AG04450 (cell line): ENCODE measurements at regions of chr14 and their contacts with region 1.

Region 1: GRCh38 chr14:75906676-75907280 is 75.0 kb downstream of the TGFB3 start:
- DNase-seq: peak; percentile 36
- H3K4me3 ChIP-seq: no peak overlapping the region
- H3K27ac ChIP-seq: no peak overlapping the region
- H3K27me3 ChIP-seq: no peaks in the 10 kb centered on the region
- CTCF ChIP-seq: peak; percentile 88

Region 2: DNA sequence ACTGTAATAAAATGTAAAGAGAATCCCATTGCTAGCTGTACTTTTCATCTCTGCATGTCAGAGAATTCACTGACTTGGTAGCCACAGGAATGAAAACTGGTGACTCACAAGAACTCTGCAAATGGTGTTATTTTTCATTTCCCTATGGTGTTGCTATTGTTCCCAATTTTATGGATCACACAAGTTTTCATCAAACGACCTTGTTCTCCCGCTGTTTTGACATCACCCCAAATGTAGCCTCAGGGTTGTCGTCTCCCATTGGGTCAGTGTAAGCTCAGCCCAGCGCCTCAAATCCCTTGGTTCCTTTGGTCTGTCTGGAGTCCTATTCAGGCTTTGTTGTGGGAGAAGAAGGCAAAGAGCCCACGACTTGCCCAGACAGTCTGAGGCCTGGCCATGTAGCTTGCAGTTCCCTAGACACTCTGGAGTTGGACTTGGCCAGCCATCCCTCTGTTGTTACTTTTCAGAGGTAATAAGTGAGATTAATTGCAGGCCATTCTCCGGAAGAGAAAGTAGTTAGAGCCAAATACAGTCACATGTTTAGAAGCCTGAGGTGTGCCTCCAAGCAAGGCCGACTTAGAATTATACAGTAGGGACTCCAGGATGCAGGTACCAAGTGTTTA is 84.1 kb before region 1 on chr14:
- CTCF ChIA-PET with region 1: interaction called, 22 read pairs
- POLR2A ChIA-PET with region 1: no interaction called
- DNase-seq: peak; percentile 46
- H3K4me3 ChIP-seq: no peak overlapping the region
- H3K27ac ChIP-seq: peak overlapping the region; percentile 59
- H3K27me3 ChIP-seq: no peaks in the 10 kb centered on the region
- CTCF ChIP-seq: no peak

Region 3: GRCh38 chr14:75896341-75896740 is 10.4 kb before region 1 on chr14:
- CTCF ChIA-PET with region 1: interaction called, 55 read pairs
- POLR2A ChIA-PET with region 1: interaction called, 6 read pairs
- DNase-seq: no peak
- H3K4me3 ChIP-seq: no peak overlapping the region
- H3K27ac ChIP-seq: no peak overlapping the region
- H3K27me3 ChIP-seq: no peaks in the 10 kb centered on the region
- CTCF ChIP-seq: no peak

Region 4: DNA sequence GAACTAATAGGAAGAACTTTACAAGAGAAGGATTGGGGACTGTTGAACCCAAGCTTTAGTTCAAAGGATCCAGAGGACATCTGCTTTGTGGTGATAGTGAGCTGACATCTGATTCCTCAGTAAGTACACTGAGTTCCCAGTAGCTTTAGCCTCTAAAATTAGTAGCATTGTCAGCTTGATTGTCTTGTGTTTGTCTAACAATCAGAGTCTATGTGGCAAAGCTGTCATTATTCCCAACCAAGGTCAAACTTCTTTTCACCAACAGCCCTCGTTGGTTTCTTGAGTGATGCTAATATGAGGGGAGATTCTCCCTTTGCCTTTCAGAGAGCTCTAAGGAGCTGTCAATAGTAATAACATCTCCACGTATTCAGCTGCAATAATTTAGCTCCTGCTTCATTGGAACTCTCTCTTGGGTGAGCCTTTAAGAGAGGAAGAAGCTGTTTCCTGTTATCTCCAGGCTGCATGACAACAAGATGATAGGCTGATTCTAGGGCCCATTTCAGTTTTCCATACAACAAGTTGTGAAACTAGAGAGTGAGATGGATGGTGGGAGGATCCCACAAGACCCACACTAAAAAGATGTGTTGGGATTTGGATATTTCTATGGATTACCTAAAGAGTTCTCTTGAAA is 28.3 kb after region 1 on chr14:
- CTCF ChIA-PET with region 1: interaction called, 35 read pairs
- POLR2A ChIA-PET with region 1: no interaction called
- DNase-seq: no peak
- H3K4me3 ChIP-seq: no peak overlapping the region
- H3K27ac ChIP-seq: no peak overlapping the region
- H3K27me3 ChIP-seq: no peaks in the 10 kb centered on the region
- CTCF ChIP-seq: no peak

Region 5: GRCh38 chr14:75982266-75983018 is 75.7 kb after region 1 on chr14:
- CTCF ChIA-PET with region 1: interaction called, 94 read pairs
- POLR2A ChIA-PET with region 1: interaction called, 10 read pairs
- DNase-seq: peak; percentile 50
- H3K4me3 ChIP-seq: peak overlapping the region; percentile 66
- H3K27ac ChIP-seq: peak overlapping the region; percentile 74
- H3K27me3 ChIP-seq: peaks cover 3% of the 10 kb centered on the region
- CTCF ChIP-seq: peak; percentile 65

Region 6: GRCh38 chr14:76080025-76080424 is 173.2 kb after region 1 on chr14:
- CTCF ChIA-PET with region 1: no interaction called
- POLR2A ChIA-PET with region 1: no interaction called
- DNase-seq: no peak
- H3K4me3 ChIP-seq: no peak overlapping the region
- H3K27ac ChIP-seq: no peak overlapping the region
- H3K27me3 ChIP-seq: no peaks in the 10 kb centered on the region
- CTCF ChIP-seq: no peak

Region 7: GRCh38 chr14:76109087-76109880 is 202.5 kb after region 1 on chr14:
- CTCF ChIA-PET with region 1: no interaction called
- POLR2A ChIA-PET with region 1: no interaction called
- DNase-seq: no peak
- H3K4me3 ChIP-seq: no peak overlapping the region
- H3K27ac ChIP-seq: no peak overlapping the region
- H3K27me3 ChIP-seq: peaks cover 12% of the 10 kb centered on the region
- CTCF ChIP-seq: no peak